Caco-2 (cell line): ENCODE measurements at regions of chr14 and their contacts with region 1.

Region 1: DNA sequence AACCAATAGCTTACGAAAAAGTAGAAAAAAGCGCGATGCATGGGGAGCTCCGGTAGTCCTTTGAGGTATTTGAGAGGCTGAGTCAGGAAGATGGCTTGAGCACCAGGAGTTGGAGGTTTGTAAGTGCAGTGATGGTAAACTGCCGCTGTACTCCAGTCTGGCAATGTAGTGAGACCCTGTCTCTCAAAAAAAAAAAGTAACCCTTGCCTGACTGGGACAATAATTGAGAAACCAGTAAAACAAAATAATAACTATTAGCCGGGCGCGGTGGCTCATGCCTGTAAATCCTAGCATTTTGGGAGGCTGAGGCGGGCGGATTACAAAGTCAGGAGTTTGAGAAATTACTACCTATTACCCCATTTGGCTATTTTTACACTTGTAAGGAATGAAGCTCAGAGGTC is 632 bp upstream of the ACOT2 start:
- DNase-seq: peak in 1 of 2 experiments; percentile 30
- H3K4me3 ChIP-seq: peak overlapping the region; percentile 47
- H3K4me3 Mint-ChIP-seq: peak overlapping the region; percentile 95
- H3K27ac Mint-ChIP-seq: peak overlapping the region; percentile 95
- H3K4me1 ChIP-seq: peaks cover 11% of the 10 kb centered on the region
- H3K4me1 Mint-ChIP-seq: peaks cover 6% of the 10 kb centered on the region
- H3K27me3 ChIP-seq: no peaks in the 10 kb centered on the region
- H3K27me3 Mint-ChIP-seq: no peaks in the 10 kb centered on the region
- CTCF ChIP-seq: no peak

Region 2: DNA sequence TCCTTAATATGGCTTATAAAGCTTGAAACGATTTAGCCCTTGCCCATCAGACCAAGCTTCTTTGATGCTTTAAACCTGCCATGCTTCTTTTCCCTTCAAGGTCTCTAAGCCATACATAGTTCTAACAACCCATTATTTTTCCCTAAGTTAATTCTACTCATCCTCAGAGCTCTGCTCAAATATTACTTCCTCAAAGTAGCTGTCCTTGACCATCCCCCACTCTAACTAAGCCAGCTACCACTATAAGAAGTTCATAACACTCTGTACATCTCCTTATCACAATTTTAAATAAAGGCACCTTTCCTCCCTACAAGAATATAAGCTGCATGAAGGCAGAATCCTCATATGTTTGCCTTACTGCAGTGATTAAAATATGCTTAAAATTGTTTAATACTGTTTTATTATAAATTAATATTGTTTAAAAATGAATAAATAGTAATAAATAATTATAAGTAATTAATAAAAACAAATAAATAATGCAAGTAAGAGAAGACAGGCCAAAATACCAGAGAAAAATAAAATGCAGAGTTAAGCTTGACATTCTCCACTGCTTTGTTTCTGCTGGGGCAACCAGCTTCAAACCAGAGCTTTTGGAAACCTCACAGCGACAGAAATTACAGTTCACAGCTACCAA is 186.9 kb before region 1 on chr14:
- CTCF ChIA-PET with region 1: no interaction called
- POLR2A ChIA-PET with region 1: no interaction called
- intact Hi-C with region 1: no loop called
- DNase-seq: no peak
- H3K4me3 ChIP-seq: no peak overlapping the region
- H3K4me3 Mint-ChIP-seq: no peak overlapping the region
- H3K27ac Mint-ChIP-seq: no peak overlapping the region
- H3K4me1 ChIP-seq: no peaks in the 10 kb centered on the region
- H3K4me1 Mint-ChIP-seq: peaks cover 9% of the 10 kb centered on the region
- H3K27me3 ChIP-seq: no peaks in the 10 kb centered on the region
- H3K27me3 Mint-ChIP-seq: no peaks in the 10 kb centered on the region
- CTCF ChIP-seq: no peak

Region 3: DNA sequence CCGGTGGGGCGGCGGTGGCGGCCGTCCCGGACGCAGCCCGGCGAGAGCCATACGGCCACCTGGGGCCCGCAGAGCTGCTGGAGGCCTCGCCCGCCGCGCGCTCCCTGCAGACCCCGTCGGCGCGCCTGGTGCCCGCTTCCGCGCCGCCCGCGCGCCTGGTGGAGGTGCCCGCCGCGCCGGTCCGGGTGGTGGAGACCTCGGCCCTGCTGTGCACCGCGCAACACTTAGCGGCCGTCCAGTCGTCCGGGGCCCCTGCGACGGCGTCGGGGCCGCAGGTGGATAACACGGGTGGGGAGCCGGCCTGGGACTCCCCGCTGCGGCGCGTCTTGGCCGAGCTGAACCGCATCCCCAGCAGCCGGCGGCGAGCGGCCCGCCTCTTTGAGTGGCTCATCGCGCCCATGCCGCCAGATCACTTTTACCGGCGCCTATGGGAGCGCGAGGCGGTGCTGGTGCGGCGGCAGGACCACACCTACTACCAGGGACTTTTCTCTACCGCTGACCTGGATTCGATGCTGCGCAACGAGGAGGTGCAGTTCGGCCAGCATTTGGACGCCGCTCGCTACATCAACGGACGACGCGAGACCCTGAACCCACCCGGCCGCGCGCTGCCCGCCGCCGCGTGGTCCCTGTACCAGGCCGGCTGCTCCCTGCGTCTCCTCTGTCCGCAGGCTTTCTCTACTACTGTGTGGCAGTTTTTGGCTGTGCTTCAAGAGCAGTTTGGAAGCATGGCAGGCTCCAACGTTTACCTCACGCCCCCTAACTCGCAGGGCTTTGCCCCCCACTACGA is 76.9 kb before region 1 on chr14:
- CTCF ChIA-PET with region 1: no interaction called
- POLR2A ChIA-PET with region 1: interaction called, 7 read pairs
- intact Hi-C with region 1: loop called (anchors 2 kb)
- DNase-seq: peak; percentile 62 to 71
- H3K4me3 ChIP-seq: peak overlapping the region; percentile 71
- H3K4me3 Mint-ChIP-seq: peak overlapping the region; percentile 91
- H3K27ac Mint-ChIP-seq: peak overlapping the region; percentile 86
- H3K4me1 ChIP-seq: peaks cover 18% of the 10 kb centered on the region
- H3K4me1 Mint-ChIP-seq: peaks cover 11% of the 10 kb centered on the region
- H3K27me3 ChIP-seq: no peaks in the 10 kb centered on the region
- H3K27me3 Mint-ChIP-seq: no peaks in the 10 kb centered on the region
- CTCF ChIP-seq: no peak

Region 4: GRCh38 chr14:73503648-73504047 is 64.7 kb before region 1 on chr14:
- CTCF ChIA-PET with region 1: interaction called, 11 read pairs
- POLR2A ChIA-PET with region 1: interaction called, 3 read pairs
- intact Hi-C with region 1: no loop called
- DNase-seq: no peak
- H3K4me3 ChIP-seq: no peak overlapping the region
- H3K4me3 Mint-ChIP-seq: no peak overlapping the region
- H3K27ac Mint-ChIP-seq: no peak overlapping the region
- H3K4me1 ChIP-seq: no peaks in the 10 kb centered on the region
- H3K4me1 Mint-ChIP-seq: no peaks in the 10 kb centered on the region
- H3K27me3 ChIP-seq: no peaks in the 10 kb centered on the region
- H3K27me3 Mint-ChIP-seq: no peaks in the 10 kb centered on the region
- CTCF ChIP-seq: no peak

Region 5: GRCh38 chr14:73613046-73613383 is 44.6 kb after region 1 on chr14:
- CTCF ChIA-PET with region 1: interaction called, 12 read pairs
- POLR2A ChIA-PET with region 1: interaction called, 7 read pairs
- intact Hi-C with region 1: no loop called
- DNase-seq: no peak
- H3K4me3 ChIP-seq: peak overlapping the region; percentile 64
- H3K4me3 Mint-ChIP-seq: peak overlapping the region; percentile 80
- H3K27ac Mint-ChIP-seq: no peak overlapping the region
- H3K4me1 ChIP-seq: peaks cover 8% of the 10 kb centered on the region
- H3K4me1 Mint-ChIP-seq: peaks cover 5% of the 10 kb centered on the region
- H3K27me3 ChIP-seq: no peaks in the 10 kb centered on the region
- H3K27me3 Mint-ChIP-seq: no peaks in the 10 kb centered on the region
- CTCF ChIP-seq: no peak

Region 6: DNA sequence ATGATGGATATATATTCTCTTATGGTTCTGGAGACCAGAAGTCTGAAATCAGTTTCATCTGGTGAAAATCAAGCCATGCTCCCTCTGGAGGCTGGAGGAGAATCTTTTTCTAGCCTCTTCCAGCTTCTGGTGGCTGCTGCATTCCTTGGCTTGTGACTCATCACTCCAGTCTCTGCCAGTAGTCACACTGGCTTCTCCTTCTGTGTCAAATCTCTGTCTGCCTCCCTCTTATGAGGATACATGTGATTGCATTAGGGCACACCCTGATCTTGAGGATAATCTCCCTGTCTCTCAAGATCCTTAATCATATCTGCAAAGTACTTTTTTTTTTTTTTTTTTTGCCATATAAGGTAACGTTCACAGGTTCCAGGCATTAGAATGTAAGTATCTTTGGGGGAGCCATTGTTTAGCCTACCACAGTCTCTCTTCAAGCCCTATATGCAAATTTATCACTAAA is 94.1 kb after region 1 on chr14:
- CTCF ChIA-PET with region 1: no interaction called
- POLR2A ChIA-PET with region 1: no interaction called
- intact Hi-C with region 1: no loop called
- DNase-seq: peak; percentile 62 to 74
- H3K4me3 ChIP-seq: no peak overlapping the region
- H3K4me3 Mint-ChIP-seq: no peak overlapping the region
- H3K27ac Mint-ChIP-seq: peak overlapping the region; percentile 65
- H3K4me1 ChIP-seq: peaks cover 17% of the 10 kb centered on the region
- H3K4me1 Mint-ChIP-seq: peaks cover 22% of the 10 kb centered on the region
- H3K27me3 ChIP-seq: no peaks in the 10 kb centered on the region
- H3K27me3 Mint-ChIP-seq: no peaks in the 10 kb centered on the region
- CTCF ChIP-seq: peak; percentile 19 to 23